ENCODE measurements at regions of chr14 and their contacts with region 1.

Region 1: DNA sequence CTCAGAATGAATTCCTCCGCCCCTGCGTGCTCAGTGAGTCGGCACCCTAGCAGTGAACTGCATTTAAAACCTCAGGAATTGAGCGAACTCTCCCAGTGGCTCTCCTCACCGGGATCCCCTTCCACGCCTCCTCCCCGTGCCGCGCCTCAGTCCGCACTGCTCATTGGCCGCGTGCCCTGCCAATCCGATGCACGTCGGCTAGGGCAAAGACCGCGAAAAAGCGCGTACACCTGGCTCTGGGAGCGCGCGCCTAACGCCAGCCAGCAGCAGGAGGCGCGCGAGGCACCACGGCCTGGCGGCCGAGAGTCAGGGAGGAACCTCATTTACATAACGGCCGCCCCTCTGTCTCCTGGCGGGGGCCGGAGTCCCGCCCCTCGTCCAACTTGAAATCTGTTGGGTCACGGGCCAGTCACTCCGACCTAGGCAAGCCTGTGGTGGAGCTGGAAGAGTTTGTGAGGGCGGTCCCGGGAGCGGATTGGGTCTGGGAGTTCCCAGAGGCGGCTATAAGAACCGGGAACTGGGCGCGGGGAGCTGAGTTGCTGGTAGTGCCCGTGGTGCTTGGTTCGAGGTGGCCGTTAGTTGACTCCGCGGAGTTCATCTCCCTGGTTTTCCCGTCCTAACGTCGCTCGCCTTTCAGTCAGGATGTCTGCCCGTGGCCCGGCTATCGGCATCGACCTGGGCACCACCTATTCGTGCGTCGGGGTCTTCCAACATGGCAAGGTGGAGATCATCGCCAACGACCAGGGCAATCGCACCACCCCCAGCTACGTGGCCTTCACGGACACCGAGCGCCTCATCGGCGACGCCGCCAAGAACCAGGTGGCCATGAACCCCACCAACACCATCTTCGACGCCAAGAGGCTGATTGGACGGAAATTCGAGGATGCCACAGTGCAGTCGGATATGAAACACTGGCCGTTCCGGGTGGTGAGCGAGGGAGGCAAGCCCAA is at the start of gene HSPA2:
- DNase-seq: peak; percentile 99
- ATAC-seq: peak; percentile 97 to 99 (median 98)
- H3K4me3 ChIP-seq: peak within 1 kb of the TSS; percentile 41 to 75 (median 70)
- H3K27ac ChIP-seq: peak within 1 kb of the TSS; percentile 12 to 84 (median 82)
- H3K4me1 ChIP-seq: peaks cover 0 to 35% (median 16%) of the 10 kb centered on the region in 9 donors
- H3K27me3 ChIP-seq: peaks cover 0 to 44% (median 4%) of the 10 kb centered on the region in 7 donors
- CTCF ChIP-seq: peak; percentile 63 to 99 (median 89)
- total RNA-seq, gene HSPA2: 9.4 to 77.6 (median 34.8) TPM

Region 2: DNA sequence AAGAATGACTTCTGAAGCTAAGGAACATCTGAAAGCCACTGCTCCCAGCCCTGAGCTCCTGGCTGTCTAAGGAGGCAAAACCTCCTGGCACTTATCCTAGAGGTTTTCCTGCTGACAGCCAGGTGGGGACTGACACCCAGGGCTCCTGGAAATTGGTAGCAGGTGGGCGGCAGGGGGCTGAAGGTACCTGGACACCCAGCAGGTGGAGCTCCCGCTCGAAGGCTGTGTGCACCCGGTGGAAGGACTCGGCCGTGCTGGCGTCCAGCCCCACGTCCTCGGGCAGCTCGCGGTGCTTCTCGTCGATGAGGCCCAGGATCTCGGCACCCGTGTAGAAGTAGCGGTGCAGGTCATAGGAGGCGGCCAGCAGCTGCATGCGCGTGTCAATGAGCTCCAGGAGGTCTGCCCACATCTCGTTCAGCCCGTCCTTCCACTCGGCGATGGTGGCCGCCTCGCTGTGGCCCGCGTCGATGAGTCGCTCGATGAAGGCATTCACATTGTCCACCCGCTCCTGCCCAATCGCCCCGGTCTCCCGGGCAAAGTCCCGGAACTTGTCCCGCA is 232.0 kb after region 1 on chr14:
- intact Hi-C with region 1: loop called in 1 of 10 experiments (anchors 10 kb)
- DNase-seq: no peak
- ATAC-seq: no peak
- H3K4me3 ChIP-seq: no peak overlapping the region
- H3K27ac ChIP-seq: no peak overlapping the region
- H3K4me1 ChIP-seq: peaks cover 0 to 12% (median 6%) of the 10 kb centered on the region in 9 donors
- H3K27me3 ChIP-seq: no peaks in the 10 kb centered on the region
- CTCF ChIP-seq: peak in 1 of 9 donors; percentile 9